ENCODE measurements at regions of chr3 and their contacts with region 1.

Region 1: DNA sequence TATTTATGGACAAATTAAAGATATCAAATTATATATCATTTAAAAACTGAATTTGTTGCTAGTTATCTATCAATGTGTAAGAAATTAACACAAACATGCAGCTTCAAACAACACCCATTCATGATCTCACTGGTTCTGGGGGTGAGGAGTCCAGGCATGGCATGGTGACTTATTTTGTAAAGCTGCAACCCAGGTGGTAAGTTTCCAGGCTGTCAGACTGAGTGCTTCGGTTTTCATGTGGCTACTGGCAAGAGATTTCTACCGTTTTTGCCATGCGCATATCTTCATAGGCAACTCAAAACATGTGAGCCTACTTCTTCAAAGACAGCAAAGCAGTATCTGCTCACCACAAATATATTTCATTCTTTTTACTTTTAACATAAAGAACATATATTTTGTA is 364.3 kb upstream of the BCHE start:
- DNase-seq: no peak

Region 2: DNA sequence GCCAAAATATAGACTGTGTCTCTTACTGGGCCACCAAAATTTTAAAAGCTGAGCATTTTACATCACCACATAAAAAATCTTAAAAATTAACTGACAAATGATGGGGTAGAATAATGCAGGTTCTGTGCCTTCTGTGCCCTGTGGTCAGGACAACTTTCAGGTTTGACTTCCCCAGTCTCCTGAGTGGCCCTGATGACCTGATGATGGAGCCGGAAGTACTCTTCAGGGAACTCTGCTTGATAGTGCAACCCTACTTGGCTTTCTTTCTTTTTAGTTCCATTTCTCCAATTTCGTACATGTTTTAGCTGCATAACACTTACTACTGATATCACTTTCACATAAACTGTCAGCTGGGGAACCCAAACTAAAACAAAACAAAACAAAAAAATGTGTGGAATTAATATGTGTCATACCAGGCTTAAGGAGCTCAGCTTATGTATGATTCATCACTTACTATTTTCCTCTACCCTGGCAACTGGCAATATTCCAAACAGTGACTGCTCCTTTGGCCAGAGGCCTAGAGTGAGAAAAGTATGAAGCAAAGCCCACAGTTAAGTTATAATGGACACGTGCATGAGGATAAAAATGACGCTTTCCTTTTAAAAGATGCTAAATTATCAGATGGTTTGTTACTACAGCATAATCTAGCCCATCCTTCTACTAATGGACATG is 558.6 kb before region 1 on chr3:
- intact Hi-C with region 1: no loop called
- DNase-seq: no peak

Region 3: GRCh38 chr3:166114448-166114847 is 87.0 kb before region 1 on chr3:
- intact Hi-C with region 1: no loop called
- DNase-seq: no peak

Region 4: DNA sequence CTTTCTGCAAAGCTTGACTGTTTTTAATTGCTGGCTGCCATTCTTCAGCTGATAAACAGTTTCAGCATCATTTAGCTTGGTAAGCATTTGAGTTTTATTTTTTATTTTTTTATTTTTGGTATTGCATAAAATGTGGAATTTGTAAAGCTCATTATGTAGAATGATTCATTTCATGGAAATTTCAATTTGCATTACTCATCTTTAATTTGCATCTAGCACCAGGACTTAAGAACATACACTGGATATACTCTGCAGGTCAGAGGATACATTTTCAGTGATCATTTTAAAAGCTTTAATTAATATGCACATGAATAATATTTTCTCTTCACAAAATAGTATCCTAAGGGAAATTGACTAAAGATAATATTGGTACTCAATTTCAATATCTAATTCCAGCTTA is 368.1 kb after region 1 on chr3:
- intact Hi-C with region 1: loop called in 1 of 2 experiments (anchors 5 kb)
- DNase-seq: no peak